PC-9 (cell line): ENCODE measurements at regions of chr22 and their contacts with region 1.

Region 1: GRCh38 chr22:46528121-46528610 is 9.3 kb downstream of the CELSR1 start:
- DNase-seq: peak; percentile 79 to 99
- H3K4me3 ChIP-seq: peak overlapping the region; percentile 5; the same call in 1 of the 2 replicates
- H3K27ac ChIP-seq: peak overlapping the region; percentile 99
- H3K4me1 ChIP-seq: peaks cover 58% of the 10 kb centered on the region
- H3K27me3 ChIP-seq: no peaks in the 10 kb centered on the region
- CTCF ChIP-seq: no peak

Region 2: GRCh38 chr22:46377566-46378425 is 150.4 kb before region 1 on chr22:
- CTCF ChIA-PET with region 1: no interaction called
- POLR2A ChIA-PET with region 1: interaction called, 17 read pairs
- intact Hi-C with region 1: no loop called
- DNase-seq: peak; percentile 94 to 96
- H3K4me3 ChIP-seq: peak overlapping the region; percentile 39; the same call in 1 of the 2 replicates
- H3K27ac ChIP-seq: peak overlapping the region; percentile 95
- H3K4me1 ChIP-seq: peaks cover 67% of the 10 kb centered on the region
- H3K27me3 ChIP-seq: no peaks in the 10 kb centered on the region
- CTCF ChIP-seq: no peak

Region 3: GRCh38 chr22:46457524-46458488 is 70.4 kb before region 1 on chr22:
- CTCF ChIA-PET with region 1: no interaction called
- POLR2A ChIA-PET with region 1: no interaction called
- intact Hi-C with region 1: loop called (anchors 2 kb)
- DNase-seq: peak; percentile 78 to 88
- H3K4me3 ChIP-seq: no peak overlapping the region
- H3K27ac ChIP-seq: peak overlapping the region; percentile 68
- H3K4me1 ChIP-seq: peaks cover 53% of the 10 kb centered on the region
- H3K27me3 ChIP-seq: no peaks in the 10 kb centered on the region
- CTCF ChIP-seq: no peak

Region 4: GRCh38 chr22:46501701-46502100 is 26.5 kb before region 1 on chr22:
- CTCF ChIA-PET with region 1: no interaction called
- POLR2A ChIA-PET with region 1: no interaction called
- intact Hi-C with region 1: loop called (anchors 1 kb)
- DNase-seq: peak; percentile 60 to 87
- H3K4me3 ChIP-seq: no peak overlapping the region
- H3K27ac ChIP-seq: peak overlapping the region; percentile 81
- H3K4me1 ChIP-seq: peaks cover 32% of the 10 kb centered on the region
- H3K27me3 ChIP-seq: no peaks in the 10 kb centered on the region
- CTCF ChIP-seq: no peak

Region 5: GRCh38 chr22:46514592-46515207 is 13.5 kb before region 1 on chr22:
- CTCF ChIA-PET with region 1: interaction called, 3 read pairs
- POLR2A ChIA-PET with region 1: no interaction called
- intact Hi-C with region 1: loop called (anchors 1 kb)
- DNase-seq: peak; percentile 69 to 73
- H3K4me3 ChIP-seq: no peak overlapping the region
- H3K27ac ChIP-seq: peak overlapping the region; percentile 75
- H3K4me1 ChIP-seq: peaks cover 21% of the 10 kb centered on the region
- H3K27me3 ChIP-seq: no peaks in the 10 kb centered on the region
- CTCF ChIP-seq: no peak